Activated CD4-positive, alpha-beta T cell treated with anti-CD3 and anti-CD28 coated beads, Interleukin-2, amount 10 ng/mL, durations not matched to agents 24 days and 14 days (primary cell): ENCODE measurements at regions of chr9 and their contacts with region 1.

Region 1: GRCh38 chr9:132849185-132849706 is 28.8 kb downstream of the AK8 start:
- DNase-seq: peak; percentile 64
- H3K4me3 Mint-ChIP-seq: peak overlapping the region; percentile 52
- H3K27ac Mint-ChIP-seq: peak overlapping the region; percentile 58
- H3K4me1 Mint-ChIP-seq: peaks cover 17% of the 10 kb centered on the region
- H3K27me3 Mint-ChIP-seq: peaks cover 1% of the 10 kb centered on the region

Region 2: DNA sequence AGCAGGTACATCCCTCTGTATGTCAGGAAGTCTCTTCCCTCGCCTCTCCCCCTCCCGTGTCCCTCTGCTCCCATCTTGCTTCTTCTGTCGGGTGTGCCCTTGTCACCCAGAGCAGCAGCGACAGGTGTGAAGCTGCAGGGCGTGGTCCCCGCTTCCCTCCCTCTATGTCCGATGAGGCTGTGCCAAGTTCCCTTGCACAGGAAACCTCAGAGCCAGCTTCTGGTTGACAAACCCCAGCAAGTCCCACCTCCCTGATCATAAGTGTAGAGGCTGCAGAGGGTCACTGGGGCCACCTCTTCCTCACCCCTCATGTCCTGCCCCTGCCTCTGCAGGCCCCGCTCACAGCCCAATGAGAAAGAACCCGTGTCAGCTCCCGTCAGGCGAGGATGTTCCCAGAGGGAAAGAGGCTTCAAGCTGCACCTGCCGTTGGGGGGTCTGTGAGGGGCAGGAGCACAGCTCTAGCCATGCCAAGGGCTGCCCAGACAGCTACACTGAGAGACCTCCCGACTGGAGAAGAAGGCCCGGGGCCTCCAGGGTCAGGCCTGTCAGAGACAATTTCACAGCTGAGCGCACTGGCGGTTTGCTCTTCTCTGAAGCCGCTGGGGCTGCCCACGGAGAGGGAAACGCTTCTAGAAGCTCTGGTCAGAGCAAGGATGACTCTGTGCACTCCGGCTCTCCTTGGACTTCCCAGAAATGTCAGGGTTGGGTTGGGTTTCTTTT is 44.5 kb before region 1 on chr9:
- intact Hi-C with region 1: no loop called
- DNase-seq: no peak
- H3K4me3 Mint-ChIP-seq: no peak overlapping the region
- H3K27ac Mint-ChIP-seq: no peak overlapping the region
- H3K4me1 Mint-ChIP-seq: peaks cover 4% of the 10 kb centered on the region
- H3K27me3 Mint-ChIP-seq: peaks cover 46% of the 10 kb centered on the region

Region 3: DNA sequence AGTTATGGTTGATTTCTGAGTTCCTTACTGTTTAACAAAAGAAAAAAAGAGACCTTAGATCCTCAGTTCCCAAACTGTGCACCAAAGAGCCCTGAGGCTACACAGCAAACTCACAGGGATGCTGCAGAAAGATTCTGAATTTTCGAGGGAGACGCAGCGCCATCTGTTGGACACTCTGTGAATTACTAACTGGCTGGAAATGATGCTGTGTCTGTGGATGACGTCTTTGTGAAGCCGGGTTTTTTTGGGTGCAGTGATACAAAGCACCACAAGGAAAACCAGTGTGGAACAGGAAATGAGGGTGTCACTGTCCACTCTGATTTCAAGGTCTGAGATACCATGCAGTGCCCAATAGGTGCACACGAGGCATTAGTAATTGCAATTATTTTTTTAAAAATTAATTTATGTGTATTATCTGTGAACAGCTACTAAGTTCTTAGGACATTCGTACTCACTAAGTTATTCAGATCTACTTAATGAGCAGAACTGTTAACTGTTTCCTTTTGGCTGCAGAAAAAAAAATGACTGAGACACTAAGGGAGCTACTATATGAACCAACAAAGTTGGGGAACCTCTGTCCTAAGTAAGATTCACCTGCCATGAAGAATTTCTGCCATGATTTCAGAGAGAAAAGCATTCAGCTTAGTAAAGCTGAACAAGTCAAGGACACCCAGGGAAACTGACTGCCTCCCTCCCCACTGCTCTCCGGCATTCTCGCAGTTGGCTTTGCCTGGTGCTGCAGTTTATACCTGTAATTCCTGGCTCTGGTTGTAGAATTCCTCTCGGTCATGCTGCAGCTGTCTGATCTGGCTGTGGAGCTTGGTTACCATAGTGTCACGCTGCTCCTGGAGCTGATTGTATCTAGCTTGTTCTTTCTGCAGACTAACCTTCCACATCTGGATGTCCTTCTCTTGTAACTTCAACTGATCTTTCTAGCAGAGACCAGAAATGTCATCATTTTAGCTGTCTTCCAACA is 52.9 kb after region 1 on chr9:
- intact Hi-C with region 1: loop called (anchors 5 kb)
- DNase-seq: peak; percentile 94
- H3K4me3 Mint-ChIP-seq: no peak overlapping the region
- H3K27ac Mint-ChIP-seq: no peak overlapping the region
- H3K4me1 Mint-ChIP-seq: peaks cover 4% of the 10 kb centered on the region
- H3K27me3 Mint-ChIP-seq: no peaks in the 10 kb centered on the region